Activated CD4-positive, alpha-beta T cell treated with anti-CD3 and anti-CD28 coated beads for 36 hours (primary cell): ENCODE measurements at regions of chr2 and their contacts with region 1.

Region 1: GRCh38 chr2:36597532-36598377 is at the start of gene FEZ2:
- DNase-seq: peak; percentile 83
- ATAC-seq: peak; percentile 94
- H3K4me3 Mint-ChIP-seq: peak within 1 kb of the TSS; percentile 87
- H3K27ac Mint-ChIP-seq: peak within 1 kb of the TSS; percentile 92
- H3K4me1 Mint-ChIP-seq: peaks cover 29% of the 10 kb centered on the region
- H3K27me3 Mint-ChIP-seq: no peaks in the 10 kb centered on the region
- total RNA-seq, gene FEZ2: 9.1 to 12.2 TPM

Region 2: GRCh38 chr2:36197181-36197971 is 400.4 kb before region 1 on chr2:
- CTCF ChIA-PET with region 1: no interaction called
- POLR2A ChIA-PET with region 1: no interaction called
- intact Hi-C with region 1: no loop called
- DNase-seq: no peak
- ATAC-seq: no peak
- H3K4me3 Mint-ChIP-seq: no peak overlapping the region
- H3K27ac Mint-ChIP-seq: no peak overlapping the region
- H3K4me1 Mint-ChIP-seq: no peaks in the 10 kb centered on the region
- H3K27me3 Mint-ChIP-seq: peaks cover 2% of the 10 kb centered on the region

Region 3: GRCh38 chr2:36618028-36618780 is 20.4 kb after region 1 on chr2:
- CTCF ChIA-PET with region 1: no interaction called
- POLR2A ChIA-PET with region 1: no interaction called
- intact Hi-C with region 1: loop called in 1 of 2 experiments (anchors 1 kb)
- DNase-seq: peak; percentile 60
- ATAC-seq: peak; percentile 98
- H3K4me3 Mint-ChIP-seq: no peak overlapping the region
- H3K27ac Mint-ChIP-seq: no peak overlapping the region
- H3K4me1 Mint-ChIP-seq: no peaks in the 10 kb centered on the region
- H3K27me3 Mint-ChIP-seq: peaks cover 9% of the 10 kb centered on the region